Panc1 (cell line): ENCODE measurements at regions of chr1 and their contacts with region 1.

Region 1: GRCh38 chr1:161792740-161793139 is 26.6 kb downstream of the ATF6 start:
- DNase-seq: peak; percentile 62
- ATAC-seq: peak; percentile 90
- H3K4me3 ChIP-seq: no peak overlapping the region
- H3K27ac ChIP-seq: no peak overlapping the region
- H3K4me1 ChIP-seq: no peaks in the 10 kb centered on the region
- H3K27me3 ChIP-seq: no peaks in the 10 kb centered on the region
- CTCF ChIP-seq: peak; percentile 61; the same call in 1 of the 2 replicates

Region 2: GRCh38 chr1:161805399-161806197 is 12.9 kb after region 1 on chr1:
- CTCF ChIA-PET with region 1: interaction called, 10 read pairs
- POLR2A ChIA-PET with region 1: no interaction called
- in situ Hi-C with region 1: no loop called
- intact Hi-C with region 1: no loop called
- DNase-seq: no peak
- ATAC-seq: no peak
- H3K4me3 ChIP-seq: no peak overlapping the region
- H3K27ac ChIP-seq: no peak overlapping the region
- H3K4me1 ChIP-seq: no peaks in the 10 kb centered on the region
- H3K27me3 ChIP-seq: no peaks in the 10 kb centered on the region
- CTCF ChIP-seq: no peak

Region 3: DNA sequence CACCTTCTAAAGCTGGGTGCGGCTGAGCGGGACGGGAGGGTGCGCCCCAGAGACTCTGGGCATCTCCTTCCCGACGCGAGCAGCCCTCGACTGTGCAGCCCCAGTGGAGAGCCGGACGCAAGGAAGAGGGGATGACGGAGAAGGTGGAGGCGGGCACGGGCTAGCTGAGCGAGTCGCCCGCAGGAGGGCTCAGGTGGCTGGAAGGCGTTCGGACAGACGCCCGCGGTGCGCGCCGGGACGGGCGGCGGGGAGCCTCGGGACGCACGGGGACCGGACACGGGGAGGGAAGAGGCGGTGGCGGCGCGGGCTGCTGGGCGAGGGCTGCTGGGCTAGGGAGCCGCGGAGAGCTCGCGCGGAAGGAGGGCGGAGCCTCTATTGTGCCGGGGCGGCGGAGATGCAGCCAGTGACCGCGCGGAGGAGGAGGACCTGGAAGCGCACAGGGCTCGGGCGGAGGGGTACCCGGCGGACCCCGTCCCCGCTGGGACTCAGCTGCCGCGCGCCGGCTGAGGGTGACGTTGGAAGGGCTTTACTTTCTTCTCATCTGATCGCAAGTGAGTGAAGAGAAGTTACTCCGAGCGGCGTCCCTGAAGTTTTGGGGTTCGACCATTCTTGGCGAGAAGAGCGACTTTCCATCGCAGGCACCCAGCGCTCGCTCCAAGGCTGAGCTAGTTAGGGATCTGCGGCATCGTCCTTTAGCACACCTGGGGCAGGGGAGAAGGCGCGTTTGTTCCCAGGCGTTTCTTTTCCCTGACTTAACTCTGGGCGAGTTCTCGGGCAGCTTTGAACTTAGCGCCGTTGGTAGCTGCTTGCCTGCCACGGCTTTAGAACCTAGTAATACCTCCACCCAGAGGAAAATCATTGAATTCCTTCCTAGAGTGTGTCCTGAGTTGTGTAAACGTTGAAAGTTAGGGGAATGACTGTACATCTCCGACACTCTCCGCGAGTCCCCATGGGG is 231.1 kb after region 1 on chr1 and contains the start of gene OLFML2B:
- CTCF ChIA-PET with region 1: interaction called, 23 read pairs
- POLR2A ChIA-PET with region 1: no interaction called
- in situ Hi-C with region 1: no loop called
- intact Hi-C with region 1: no loop called
- DNase-seq: peak; percentile 61
- ATAC-seq: peak; percentile 96
- H3K4me3 ChIP-seq: peak within 1 kb of the TSS; percentile 77 to 89
- H3K27ac ChIP-seq: no peak within 1 kb of the TSS
- H3K4me1 ChIP-seq: peaks cover 3% of the 10 kb centered on the region
- H3K27me3 ChIP-seq: peaks cover 9% of the 10 kb centered on the region
- CTCF ChIP-seq: peak; percentile 50
- total RNA-seq, gene OLFML2B: 1.5 TPM